Sigmoid colon (tissue), 7 donors: ENCODE measurements at regions of chr9 and their contacts with region 1.

Region 1: DNA sequence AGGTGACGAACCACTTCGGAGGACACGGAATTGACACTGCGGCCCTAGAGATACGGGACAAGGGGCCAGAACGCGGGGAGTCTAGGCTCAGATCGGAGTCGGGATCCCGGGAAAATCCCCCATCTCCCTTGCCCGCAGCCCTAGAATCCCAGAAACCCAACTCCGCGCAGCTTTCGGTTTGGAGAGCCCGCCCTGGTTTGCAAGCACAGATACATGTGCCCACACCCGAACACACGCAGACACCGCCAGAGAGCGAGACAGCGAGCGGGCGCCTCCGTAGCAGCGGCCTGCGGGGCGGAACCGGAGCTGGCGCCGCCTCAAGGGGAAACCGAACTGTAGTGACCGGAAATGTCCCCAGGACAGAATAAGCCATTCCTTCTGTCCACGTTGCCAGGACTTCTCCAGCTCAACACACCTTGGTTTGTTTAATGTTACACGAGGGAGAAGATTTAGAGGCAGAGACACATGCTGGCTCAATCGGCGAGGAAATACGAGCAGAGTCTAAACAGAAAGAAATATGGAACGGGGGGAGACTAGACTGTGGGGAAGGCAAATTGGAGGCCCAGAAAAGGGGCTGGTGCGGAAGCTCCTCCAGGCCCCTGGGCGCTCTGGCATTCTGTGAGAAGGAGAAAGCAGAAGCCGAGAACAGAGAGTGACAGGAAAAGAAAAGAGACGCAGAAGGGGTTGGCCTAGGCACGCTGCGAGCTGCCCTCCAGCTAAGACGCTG is 2.9 kb upstream of the PAX5 start:
- DNase-seq: no peak
- H3K4me3 ChIP-seq: peak overlapping the region; percentile 26 to 52 (median 44)
- H3K27ac ChIP-seq: no peak overlapping the region
- H3K4me1 ChIP-seq: peaks cover 0 to 45% (median 38%) of the 10 kb centered on the region in 4 donors
- H3K27me3 ChIP-seq: peaks cover 51 to 97% (median 91%) of the 10 kb centered on the region in 3 donors
- CTCF ChIP-seq: no peak
- EP300 ChIP-seq: no peak
- POLR2A ChIP-seq: no peak

Region 2: DNA sequence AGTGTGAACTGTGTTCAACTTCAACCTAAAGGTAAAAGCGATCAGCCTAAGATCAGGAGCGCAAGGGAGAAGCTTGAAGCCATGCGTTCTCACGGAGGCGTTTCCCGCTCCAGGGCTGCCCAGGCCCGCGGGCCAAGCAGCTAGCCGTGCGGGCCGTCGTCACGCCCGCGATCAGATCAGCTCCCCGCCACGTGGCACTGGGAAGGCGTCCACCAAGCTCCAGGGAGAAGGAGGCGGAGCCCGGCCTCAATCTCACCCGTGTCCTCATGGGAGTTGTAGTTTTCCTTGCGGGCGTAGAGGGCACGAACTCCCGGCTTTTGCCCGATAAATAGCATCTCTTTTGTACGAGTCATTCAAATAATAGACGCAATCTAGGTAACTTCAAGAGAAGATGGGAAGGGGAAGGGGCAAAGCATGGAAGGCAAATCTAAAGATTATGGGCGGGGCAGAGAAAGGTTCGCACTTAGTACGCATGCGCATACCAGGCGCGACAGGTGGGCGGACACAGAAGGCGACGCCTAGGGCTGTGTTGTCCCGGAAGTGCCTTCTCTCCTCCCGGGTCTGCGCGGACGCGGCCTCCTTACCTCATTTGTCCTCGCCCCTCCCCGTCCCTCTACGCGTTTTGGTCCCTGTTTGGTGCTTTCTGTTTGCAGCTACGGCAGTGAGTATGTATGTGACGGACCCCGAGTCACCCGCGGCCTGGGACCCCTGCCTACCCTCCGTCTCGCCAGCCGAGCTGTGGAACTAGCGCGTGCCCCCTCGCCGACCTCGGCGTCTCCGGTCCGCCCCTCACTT is 42.6 kb after region 1 on chr9:
- intact Hi-C with region 1: loop called (anchors 1 kb)
- DNase-seq: peak; percentile 96
- H3K4me3 ChIP-seq: peak overlapping the region; percentile 74 to 98 (median 92)
- H3K27ac ChIP-seq: peak overlapping the region; percentile 88 to 92 (median 90)
- H3K4me1 ChIP-seq: peaks cover 0 to 20% (median 13%) of the 10 kb centered on the region in 4 donors
- H3K27me3 ChIP-seq: no peaks in the 10 kb centered on the region
- CTCF ChIP-seq: no peak
- EP300 ChIP-seq: no peak
- POLR2A ChIP-seq: peak; percentile 43 to 57

Region 3: DNA sequence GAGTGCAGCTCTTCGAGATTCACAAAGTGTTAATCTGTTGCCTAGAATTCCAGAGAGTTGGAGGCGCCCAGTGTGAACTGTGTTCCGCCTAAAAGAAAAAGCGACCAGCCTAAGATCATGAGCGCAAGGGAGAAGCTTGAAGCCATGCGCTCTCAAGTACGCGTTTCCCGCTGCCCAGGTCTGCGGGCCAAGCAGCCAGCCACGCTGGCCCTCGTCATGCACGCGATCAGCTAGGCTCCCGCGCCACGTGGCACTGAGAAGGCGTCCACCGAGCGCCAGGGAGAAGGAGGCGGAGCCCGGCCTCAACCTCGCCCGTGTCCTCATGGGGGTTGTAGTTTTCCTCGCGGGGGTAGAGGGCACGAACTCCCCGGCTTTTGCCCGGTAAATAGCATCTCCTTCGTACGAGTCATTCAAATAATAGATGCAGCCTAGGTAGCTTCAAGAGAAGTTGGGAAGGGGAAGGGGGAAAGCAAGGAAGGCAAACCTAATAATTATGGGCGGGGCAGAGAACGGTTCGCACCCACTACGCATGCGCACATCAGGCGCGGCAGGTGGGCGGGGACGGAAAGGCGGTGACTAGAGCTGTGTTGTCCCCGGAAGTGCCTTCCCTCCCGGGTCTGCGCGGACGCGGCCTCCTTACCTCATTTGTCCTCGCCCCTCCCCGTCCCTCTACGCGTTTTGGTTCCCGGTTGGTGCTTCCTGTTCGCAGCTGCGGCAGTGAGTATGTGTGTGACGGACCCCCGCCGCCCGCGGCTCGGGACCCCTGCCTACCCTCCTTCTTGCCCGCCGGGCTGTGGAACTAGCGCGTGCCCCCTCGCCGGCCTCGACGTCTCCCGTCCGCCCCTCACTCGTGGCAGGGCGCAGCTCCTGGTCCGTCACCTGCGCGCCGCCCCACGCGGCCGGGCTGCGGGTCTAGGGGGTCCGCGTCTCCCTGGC is 83.2 kb after region 1 on chr9 and contains the start of gene ZCCHC7:
- intact Hi-C with region 1: loop called (anchors 10 kb)
- DNase-seq: peak; percentile 98
- H3K4me3 ChIP-seq: peak within 1 kb of the TSS; percentile 67 to 95 (median 88)
- H3K27ac ChIP-seq: peak within 1 kb of the TSS; percentile 81 to 96 (median 92)
- H3K4me1 ChIP-seq: peaks cover 0 to 29% (median 18%) of the 10 kb centered on the region in 4 donors
- H3K27me3 ChIP-seq: no peaks in the 10 kb centered on the region
- CTCF ChIP-seq: no peak
- EP300 ChIP-seq: no peak
- POLR2A ChIP-seq: peak; percentile 68 to 72
- total RNA-seq, gene ZCCHC7: 19.1 to 24.6 (median 22.8) TPM